ENCODE measurements at regions of chr1 and their contacts with region 1.

Region 1: DNA sequence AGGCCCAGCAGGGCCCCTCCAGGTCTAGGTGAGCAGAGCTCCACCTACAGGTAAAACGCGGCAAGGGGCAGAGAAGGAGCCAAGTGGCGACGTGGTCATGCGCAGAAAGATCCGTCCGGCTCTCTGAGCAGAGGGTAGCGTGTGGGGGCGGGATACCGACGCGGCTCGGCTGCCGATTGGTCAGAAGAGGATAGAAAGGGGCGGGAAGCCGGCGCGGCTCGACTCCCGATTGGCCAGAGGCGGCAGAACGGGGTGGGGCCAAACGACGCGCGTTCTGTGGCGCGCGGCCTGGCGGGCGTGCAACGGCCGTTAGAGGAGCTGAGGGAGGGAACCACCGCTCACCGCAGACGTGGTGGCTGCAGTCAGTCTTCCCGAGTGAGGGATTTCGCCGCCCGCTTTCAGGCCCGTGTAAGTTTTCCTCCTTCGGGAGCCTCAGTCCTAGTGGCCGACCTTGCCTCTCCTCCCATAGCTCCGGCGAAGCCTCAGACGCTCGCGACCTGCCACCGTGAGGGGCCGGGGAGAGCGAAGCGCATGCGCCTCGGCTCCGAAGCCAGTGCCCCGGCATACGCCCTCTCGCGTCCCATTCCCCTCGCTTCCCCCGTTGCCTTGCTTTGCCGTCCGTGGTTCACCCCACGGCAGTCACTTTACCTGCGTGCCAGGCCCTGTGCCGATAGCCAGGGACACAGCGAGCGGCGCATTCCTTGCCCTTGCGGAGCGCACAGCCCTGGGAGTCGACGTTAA is at the start of gene CEP85:
- DNase-seq: peak; percentile 98 to 99
- H3K4me3 ChIP-seq: peak within 1 kb of the TSS; percentile 83 to 98 (median 90)
- H3K27ac ChIP-seq: peak within 1 kb of the TSS; percentile 39; the same call in 1 of the 2 replicates
- H3K4me1 ChIP-seq: peaks cover 2 to 6% (median 4%) of the 10 kb centered on the region in 4 experiments; a peak in 6 of 7 replicates
- H3K27me3 ChIP-seq: no peaks in the 10 kb centered on the region
- CTCF ChIP-seq: peak; percentile 92 to 97 (median 92)
- EP300 ChIP-seq: 0 out of 3 replicates have a peak, but pooled peaks of 1 of the 2 experiments have one; percentile 6
- POLR2A ChIP-seq: peak in 1 of 2 experiments; percentile 84; a peak in 2 of 3 replicates
- RAD21 ChIP-seq: peak; percentile 70 to 83
- total RNA-seq, gene CEP85: 35.3 and 40.4 TPM in 2 replicates

Region 2: GRCh38 chr1:26169669-26170471 is 64.2 kb before region 1 on chr1 and contains the start of gene ZNF593:
- CTCF ChIA-PET with region 1: interaction called, 54 read pairs
- POLR2A ChIA-PET with region 1: interaction called, 6 read pairs
- DNase-seq: peak; percentile 78 to 96
- H3K4me3 ChIP-seq: peak within 1 kb of the TSS; percentile 71 to 79 (median 74)
- H3K27ac ChIP-seq: peak within 1 kb of the TSS; percentile 23; the same call in 1 of the 2 replicates
- H3K4me1 ChIP-seq: peaks cover 5 to 18% (median 13%) of the 10 kb centered on the region in 4 experiments
- H3K27me3 ChIP-seq: peaks cover 0 to 11% (median 6%) of the 10 kb centered on the region in 4 experiments; a peak in 6 of 7 replicates
- CTCF ChIP-seq: peak in 2 of 3 experiments; percentile 84 to 96; a peak in 3 of 4 replicates
- EP300 ChIP-seq: no peak; a peak in 1 of 3 replicates
- POLR2A ChIP-seq: peak in 1 of 2 experiments; percentile 86; a peak in 2 of 3 replicates
- RAD21 ChIP-seq: peak; percentile 17 to 41; a peak in 2 of 4 replicates
- total RNA-seq, gene ZNF593: 38.2 and 40.2 TPM in 2 replicates

Region 3: DNA sequence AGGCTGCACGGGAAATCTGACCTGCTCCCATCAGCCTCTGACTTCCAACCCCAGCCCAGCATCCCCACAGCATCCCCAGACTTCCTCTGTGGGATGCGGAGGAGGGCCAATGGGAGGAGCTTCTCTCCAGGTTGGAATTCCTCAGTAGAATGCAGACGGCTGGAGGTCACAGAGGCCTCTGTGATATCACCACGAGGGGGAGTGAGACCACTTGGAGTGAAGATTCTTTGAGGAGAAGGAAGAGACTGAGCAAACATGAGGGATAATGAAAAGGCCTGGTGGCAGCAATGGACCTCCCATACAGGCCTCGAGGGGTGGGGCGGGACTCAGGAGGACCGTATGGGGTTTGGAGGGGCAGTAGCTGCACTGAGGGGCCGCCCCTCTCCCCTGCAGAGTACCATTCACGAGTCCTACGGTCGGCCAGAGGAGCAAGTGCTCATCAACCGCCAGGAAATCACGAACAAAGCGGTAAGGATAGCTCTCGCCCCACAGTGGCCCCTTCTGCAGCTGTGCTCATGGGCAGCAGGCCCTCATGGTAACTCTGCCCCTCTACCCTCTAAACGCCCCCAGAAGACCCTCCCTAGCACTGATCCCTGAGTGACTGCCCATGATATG is 43.6 kb before region 1 on chr1 and contains the start of gene CATSPER4:
- CTCF ChIA-PET with region 1: interaction called, 69 read pairs
- POLR2A ChIA-PET with region 1: interaction called, 7 read pairs
- DNase-seq: peak; percentile 49 to 77
- H3K4me3 ChIP-seq: peak within 1 kb of the TSS in 1 of 4 experiments; percentile 23; a peak in 1 of 8 replicates
- H3K27ac ChIP-seq: no peak within 1 kb of the TSS
- H3K4me1 ChIP-seq: peaks cover 0 to 7% (median 2%) of the 10 kb centered on the region in 4 experiments; a peak in 3 of 7 replicates
- H3K27me3 ChIP-seq: no peaks in the 10 kb centered on the region
- CTCF ChIP-seq: peak; percentile 46 to 73 (median 64)
- EP300 ChIP-seq: no peak
- POLR2A ChIP-seq: 0 out of 3 replicates have a peak, but pooled peaks of 1 of the 2 experiments have one; percentile 16
- RAD21 ChIP-seq: peak; percentile 68 to 74
- total RNA-seq, gene CATSPER4: 0.65 and 0.90 TPM in 2 replicates

Region 4: GRCh38 chr1:26203642-26204318 is 30.3 kb before region 1 on chr1:
- CTCF ChIA-PET with region 1: interaction called, 15 read pairs
- POLR2A ChIA-PET with region 1: interaction called, 3 read pairs
- DNase-seq: no peak
- H3K4me3 ChIP-seq: no peak overlapping the region
- H3K27ac ChIP-seq: no peak overlapping the region
- H3K4me1 ChIP-seq: peaks cover 0 to 12% (median 5%) of the 10 kb centered on the region in 4 experiments; a peak in 5 of 7 replicates
- H3K27me3 ChIP-seq: no peaks in the 10 kb centered on the region
- CTCF ChIP-seq: peak; percentile 46 to 55 (median 53)
- EP300 ChIP-seq: no peak
- POLR2A ChIP-seq: no peak
- RAD21 ChIP-seq: peak; percentile 53 to 64

Region 5: GRCh38 chr1:26218906-26219494 is 15.1 kb before region 1 on chr1:
- CTCF ChIA-PET with region 1: interaction called, 29 read pairs
- POLR2A ChIA-PET with region 1: interaction called, 3 read pairs
- DNase-seq: no peak
- H3K4me3 ChIP-seq: no peak overlapping the region
- H3K27ac ChIP-seq: no peak overlapping the region
- H3K4me1 ChIP-seq: no peaks in the 10 kb centered on the region; a peak in 1 of 7 replicates
- H3K27me3 ChIP-seq: no peaks in the 10 kb centered on the region; a peak in 2 of 7 replicates
- CTCF ChIP-seq: no peak
- EP300 ChIP-seq: no peak
- POLR2A ChIP-seq: no peak
- RAD21 ChIP-seq: no peak

Region 6: GRCh38 chr1:26279456-26280332 is 45.6 kb after region 1 on chr1 and contains the start of gene SH3BGRL3:
- CTCF ChIA-PET with region 1: interaction called, 16 read pairs
- POLR2A ChIA-PET with region 1: interaction called, 4 read pairs
- DNase-seq: peak in 1 of 2 experiments; percentile 85
- H3K4me3 ChIP-seq: peak within 1 kb of the TSS; percentile 64 to 69 (median 64)
- H3K27ac ChIP-seq: peak within 1 kb of the TSS; percentile 26; the same call in 1 of the 2 replicates
- H3K4me1 ChIP-seq: peaks cover 10 to 34% (median 21%) of the 10 kb centered on the region in 4 experiments
- H3K27me3 ChIP-seq: no peaks in the 10 kb centered on the region
- CTCF ChIP-seq: peak in 2 of 3 experiments; percentile 57 to 75; a peak in 3 of 4 replicates
- EP300 ChIP-seq: no peak
- POLR2A ChIP-seq: peak in 1 of 2 experiments; percentile 63; a peak in 1 of 3 replicates
- RAD21 ChIP-seq: peak; percentile 48 to 51
- total RNA-seq, gene SH3BGRL3: 77.8 and 84.4 TPM in 2 replicates